ENCODE measurements at regions of chr15 and their contacts with region 1.

Region 1: GRCh38 chr15:99282121-99282520 is 30.8 kb downstream of the LRRC28 start:
- DNase-seq: no peak
- ATAC-seq: peak in 5 of 8 donors; percentile 20 to 59 (median 47)
- H3K4me3 ChIP-seq: no peak overlapping the region
- H3K27ac ChIP-seq: peak overlapping the region in 2 of 10 donors; percentile 49 to 70
- H3K4me1 ChIP-seq: peaks cover 0 to 23% (median 15%) of the 10 kb centered on the region in 9 donors
- H3K27me3 ChIP-seq: no peaks in the 10 kb centered on the region
- CTCF ChIP-seq: no peak

Region 2: GRCh38 chr15:99343881-99344551 is 61.9 kb after region 1 on chr15:
- intact Hi-C with region 1: loop called in 2 of 10 experiments (anchors 5 to 10 kb)
- DNase-seq: peak; percentile 37 to 48
- ATAC-seq: peak; percentile 79 to 93 (median 90)
- H3K4me3 ChIP-seq: no peak overlapping the region
- H3K27ac ChIP-seq: peak overlapping the region in 5 of 10 donors; percentile 17 to 67 (median 57)
- H3K4me1 ChIP-seq: peaks cover 0 to 27% (median 4%) of the 10 kb centered on the region in 9 donors
- H3K27me3 ChIP-seq: no peaks in the 10 kb centered on the region
- CTCF ChIP-seq: peak in 8 of 9 donors; percentile 40 to 73 (median 58)

Region 3: DNA sequence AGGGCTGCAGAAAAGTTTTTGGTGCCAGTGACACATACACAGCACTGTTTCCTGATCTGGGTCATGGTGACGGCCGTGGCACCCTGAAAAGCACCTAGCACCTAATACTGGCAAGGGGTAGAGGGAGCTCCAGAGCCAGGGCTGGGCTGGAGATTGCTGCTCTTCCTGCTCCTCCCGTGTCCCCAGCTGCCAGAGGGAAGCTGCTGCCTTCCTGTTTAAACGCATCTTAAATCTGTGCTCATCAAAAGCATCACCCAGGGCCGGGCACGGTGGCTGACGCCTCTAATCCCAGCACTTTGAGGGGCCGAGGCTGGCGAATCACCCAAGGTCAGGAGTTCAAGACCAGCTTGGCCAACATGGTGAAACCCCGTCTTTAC is 127.0 kb after region 1 on chr15:
- intact Hi-C with region 1: loop called in 1 of 10 experiments (anchors 10 kb)
- DNase-seq: peak; percentile 69 to 70
- ATAC-seq: peak; percentile 82 to 94 (median 90)
- H3K4me3 ChIP-seq: no peak overlapping the region
- H3K27ac ChIP-seq: peak overlapping the region; percentile 1 to 68 (median 52)
- H3K4me1 ChIP-seq: peaks cover 14 to 27% (median 22%) of the 10 kb centered on the region in 9 donors
- H3K27me3 ChIP-seq: no peaks in the 10 kb centered on the region
- CTCF ChIP-seq: peak; percentile 34 to 79 (median 65)

Region 4: GRCh38 chr15:99578809-99579208 is 296.7 kb after region 1 on chr15:
- intact Hi-C with region 1: loop called in 1 of 10 experiments (anchors 10 kb)
- DNase-seq: no peak
- ATAC-seq: no peak
- H3K4me3 ChIP-seq: no peak overlapping the region
- H3K27ac ChIP-seq: peak overlapping the region in 1 of 10 donors; percentile 14
- H3K4me1 ChIP-seq: peaks cover 8 to 99% (median 63%) of the 10 kb centered on the region in 9 donors
- H3K27me3 ChIP-seq: no peaks in the 10 kb centered on the region
- CTCF ChIP-seq: no peak

Region 5: GRCh38 chr15:99733268-99734039 is 451.3 kb after region 1 on chr15 and contains the start of gene LYSMD4:
- intact Hi-C with region 1: loop called in 4 of 10 experiments (anchors 2 to 10 kb)
- DNase-seq: peak; percentile 99
- ATAC-seq: peak; percentile 98 to 99 (median 99)
- H3K4me3 ChIP-seq: peak within 1 kb of the TSS; percentile 63 to 100 (median 92)
- H3K27ac ChIP-seq: peak within 1 kb of the TSS; percentile 54 to 91 (median 88)
- H3K4me1 ChIP-seq: peaks cover 0 to 44% (median 26%) of the 10 kb centered on the region in 9 donors
- H3K27me3 ChIP-seq: no peaks in the 10 kb centered on the region
- CTCF ChIP-seq: no peak
- total RNA-seq, gene LYSMD4: 7.0 to 13.4 (median 11.9) TPM

Region 6: GRCh38 chr15:99909592-99910295 is 627.6 kb after region 1 on chr15:
- intact Hi-C with region 1: loop called in 2 of 10 experiments (anchors 5 to 10 kb)
- DNase-seq: no peak
- ATAC-seq: peak in 7 of 8 donors; percentile 72 to 85 (median 79)
- H3K4me3 ChIP-seq: no peak overlapping the region
- H3K27ac ChIP-seq: no peak overlapping the region
- H3K4me1 ChIP-seq: peaks cover 0 to 7% (median 0%) of the 10 kb centered on the region in 9 donors
- H3K27me3 ChIP-seq: no peaks in the 10 kb centered on the region
- CTCF ChIP-seq: peak in 7 of 9 donors; percentile 32 to 60 (median 44)